ENCODE measurements at regions of chr3 and their contacts with region 1.

Region 1: GRCh38 chr3:68436619-68437401 is 495.5 kb downstream of the TAFA4 start:
- DNase-seq: no peak
- ATAC-seq: no peak
- H3K4me3 ChIP-seq: no peak overlapping the region
- H3K4me3 Mint-ChIP-seq: no peak overlapping the region
- H3K27ac ChIP-seq: no peak overlapping the region
- H3K27ac Mint-ChIP-seq: no peak overlapping the region
- H3K4me1 ChIP-seq: no peaks in the 10 kb centered on the region
- H3K4me1 Mint-ChIP-seq: no peaks in the 10 kb centered on the region
- H3K27me3 ChIP-seq: no peaks in the 10 kb centered on the region
- H3K27me3 Mint-ChIP-seq: no peaks in the 10 kb centered on the region
- CTCF ChIP-seq: no peak

Region 2: DNA sequence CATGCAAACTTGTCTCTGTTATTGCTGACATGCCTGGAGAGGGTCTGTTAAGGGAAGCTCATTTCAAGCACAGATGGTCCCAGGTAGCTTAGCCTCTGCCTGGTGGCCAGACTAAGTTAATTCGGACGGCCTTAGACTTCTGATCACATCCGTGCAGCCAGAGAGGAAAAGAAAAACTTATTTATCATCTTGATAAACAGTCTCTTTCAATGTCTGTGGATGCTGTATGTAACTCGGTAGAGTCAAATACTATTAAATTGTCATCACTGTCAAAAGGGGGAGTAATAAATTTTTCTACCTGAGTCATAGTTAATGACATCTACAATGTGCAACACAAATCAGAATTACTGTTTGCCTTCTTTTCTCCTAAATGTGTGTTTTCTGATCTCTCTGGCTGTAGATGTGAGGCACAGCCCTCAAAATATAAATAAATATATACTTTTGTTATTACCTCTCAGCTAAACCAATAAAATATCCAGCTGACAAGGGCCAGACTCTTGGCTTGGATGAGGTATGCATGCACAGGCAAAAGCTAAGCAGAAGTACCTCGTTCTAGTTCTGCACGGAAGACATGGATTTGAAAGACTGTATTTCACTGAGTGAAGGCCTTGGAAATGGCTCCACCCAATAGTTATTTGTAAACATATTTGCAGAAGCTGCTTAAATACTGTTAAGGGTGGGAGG is 34.4 kb before region 1 on chr3:
- CTCF ChIA-PET with region 1: no interaction called
- POLR2A ChIA-PET with region 1: no interaction called
- intact Hi-C with region 1: no loop called
- DNase-seq: no peak
- ATAC-seq: no peak
- H3K4me3 ChIP-seq: no peak overlapping the region
- H3K4me3 Mint-ChIP-seq: no peak overlapping the region
- H3K27ac ChIP-seq: no peak overlapping the region
- H3K27ac Mint-ChIP-seq: no peak overlapping the region
- H3K4me1 ChIP-seq: no peaks in the 10 kb centered on the region
- H3K4me1 Mint-ChIP-seq: no peaks in the 10 kb centered on the region
- H3K27me3 ChIP-seq: no peaks in the 10 kb centered on the region
- H3K27me3 Mint-ChIP-seq: no peaks in the 10 kb centered on the region
- CTCF ChIP-seq: no peak

Region 3: DNA sequence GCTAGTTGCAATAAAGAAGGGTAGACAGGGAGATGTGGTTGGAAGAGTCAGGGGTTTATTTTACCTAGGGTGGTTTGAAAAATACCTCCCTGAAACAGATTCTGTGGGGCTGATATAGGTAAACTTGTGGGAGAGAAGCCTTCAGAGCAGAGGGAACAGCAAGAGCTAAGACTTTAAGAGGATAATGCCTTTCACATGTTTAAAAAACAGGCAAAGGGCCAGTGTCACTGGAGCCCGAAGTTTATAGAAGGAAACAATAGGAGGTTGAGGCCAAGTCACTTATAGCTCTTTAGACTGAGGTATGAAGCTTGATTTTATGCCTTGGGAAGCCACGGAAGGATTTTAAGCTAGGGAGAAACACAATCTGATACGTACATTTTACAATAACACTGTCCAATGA is 46.8 kb after region 1 on chr3:
- CTCF ChIA-PET with region 1: no interaction called
- POLR2A ChIA-PET with region 1: no interaction called
- intact Hi-C with region 1: loop called in 1 of 2 experiments (anchors 1 kb)
- DNase-seq: no peak
- ATAC-seq: no peak
- H3K4me3 ChIP-seq: no peak overlapping the region
- H3K4me3 Mint-ChIP-seq: no peak overlapping the region
- H3K27ac ChIP-seq: no peak overlapping the region
- H3K27ac Mint-ChIP-seq: no peak overlapping the region
- H3K4me1 ChIP-seq: no peaks in the 10 kb centered on the region
- H3K4me1 Mint-ChIP-seq: no peaks in the 10 kb centered on the region
- H3K27me3 ChIP-seq: no peaks in the 10 kb centered on the region
- H3K27me3 Mint-ChIP-seq: no peaks in the 10 kb centered on the region
- CTCF ChIP-seq: no peak

Region 4: GRCh38 chr3:68515237-68515636 is 78.4 kb after region 1 on chr3:
- CTCF ChIA-PET with region 1: no interaction called
- POLR2A ChIA-PET with region 1: no interaction called
- intact Hi-C with region 1: no loop called
- DNase-seq: no peak
- ATAC-seq: no peak
- H3K4me3 ChIP-seq: no peak overlapping the region
- H3K4me3 Mint-ChIP-seq: no peak overlapping the region
- H3K27ac ChIP-seq: no peak overlapping the region
- H3K27ac Mint-ChIP-seq: no peak overlapping the region
- H3K4me1 ChIP-seq: no peaks in the 10 kb centered on the region
- H3K4me1 Mint-ChIP-seq: no peaks in the 10 kb centered on the region
- H3K27me3 ChIP-seq: no peaks in the 10 kb centered on the region
- H3K27me3 Mint-ChIP-seq: no peaks in the 10 kb centered on the region
- CTCF ChIP-seq: no peak